Caco-2 (cell line): ENCODE measurements at regions of chr9 and their contacts with region 1.

Region 1: GRCh38 chr9:134449221-134449894 is 123.1 kb downstream of the RXRA start:
- DNase-seq: peak; percentile 87 to 89
- H3K4me3 ChIP-seq: no peak overlapping the region
- H3K4me3 Mint-ChIP-seq: no peak overlapping the region
- H3K27ac Mint-ChIP-seq: no peak overlapping the region
- H3K4me1 ChIP-seq: peaks cover 6% of the 10 kb centered on the region
- H3K4me1 Mint-ChIP-seq: peaks cover 5% of the 10 kb centered on the region
- H3K27me3 ChIP-seq: no peaks in the 10 kb centered on the region
- H3K27me3 Mint-ChIP-seq: peaks cover 6% of the 10 kb centered on the region
- CTCF ChIP-seq: peak; percentile 55 to 86

Region 2: GRCh38 chr9:134517069-134517680 is 67.8 kb after region 1 on chr9:
- CTCF ChIA-PET with region 1: no interaction called
- POLR2A ChIA-PET with region 1: no interaction called
- intact Hi-C with region 1: no loop called
- DNase-seq: no peak
- H3K4me3 ChIP-seq: no peak overlapping the region
- H3K4me3 Mint-ChIP-seq: no peak overlapping the region
- H3K27ac Mint-ChIP-seq: no peak overlapping the region
- H3K4me1 ChIP-seq: no peaks in the 10 kb centered on the region
- H3K4me1 Mint-ChIP-seq: no peaks in the 10 kb centered on the region
- H3K27me3 ChIP-seq: no peaks in the 10 kb centered on the region
- H3K27me3 Mint-ChIP-seq: no peaks in the 10 kb centered on the region
- CTCF ChIP-seq: no peak

Region 3: GRCh38 chr9:134656334-134657006 is 207.1 kb after region 1 on chr9:
- CTCF ChIA-PET with region 1: interaction called, 8 read pairs
- POLR2A ChIA-PET with region 1: no interaction called
- intact Hi-C with region 1: loop called (anchors 5 kb)
- DNase-seq: peak in 1 of 2 experiments; percentile 30
- H3K4me3 ChIP-seq: no peak overlapping the region
- H3K4me3 Mint-ChIP-seq: no peak overlapping the region
- H3K27ac Mint-ChIP-seq: no peak overlapping the region
- H3K4me1 ChIP-seq: no peaks in the 10 kb centered on the region
- H3K4me1 Mint-ChIP-seq: peaks cover 6% of the 10 kb centered on the region
- H3K27me3 ChIP-seq: no peaks in the 10 kb centered on the region
- H3K27me3 Mint-ChIP-seq: no peaks in the 10 kb centered on the region
- CTCF ChIP-seq: no peak

Region 4: DNA sequence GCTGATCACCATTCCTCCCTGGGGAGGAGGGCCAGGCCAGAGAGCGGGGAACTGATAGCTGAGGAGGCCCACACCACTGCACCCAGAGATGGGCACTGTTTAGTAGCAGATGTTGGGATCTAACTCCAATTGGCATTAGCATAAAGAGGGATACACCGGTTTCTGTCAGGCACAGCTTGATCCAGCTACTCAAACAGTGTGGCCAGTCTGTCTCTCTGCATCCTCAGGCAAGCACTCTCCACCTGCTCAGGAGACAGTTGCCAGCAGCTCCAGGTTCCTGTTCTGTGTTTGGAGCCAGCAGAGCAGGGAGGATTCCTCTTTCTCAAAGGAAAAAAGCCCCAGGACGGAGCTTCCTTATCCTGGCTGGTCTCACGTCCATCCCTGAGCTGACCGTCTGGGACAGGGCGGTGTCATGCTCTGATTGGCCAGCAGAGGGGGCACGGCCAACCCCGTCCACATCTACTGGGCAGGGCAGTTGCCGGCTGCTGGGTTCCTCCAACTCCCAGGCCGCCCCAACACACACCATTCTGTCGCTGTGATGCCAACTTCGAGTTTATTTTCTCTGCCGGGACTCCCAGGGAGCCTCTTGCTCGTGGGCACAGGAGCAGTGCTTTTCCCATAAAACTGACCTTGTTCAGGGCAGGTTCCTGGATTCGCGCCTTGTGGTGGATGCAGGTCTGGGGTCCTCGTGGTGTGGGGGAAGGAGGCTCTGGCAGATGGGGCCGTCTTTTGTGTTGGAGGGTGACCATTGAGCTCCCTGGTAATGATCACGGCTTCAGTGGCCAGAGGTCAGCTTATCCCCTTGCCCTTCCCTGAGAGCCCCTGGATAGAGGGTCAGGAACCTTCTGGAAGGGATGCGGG is 240.2 kb after region 1 on chr9:
- CTCF ChIA-PET with region 1: interaction called, 5 read pairs
- POLR2A ChIA-PET with region 1: no interaction called
- intact Hi-C with region 1: loop called (anchors 2 kb)
- DNase-seq: peak; percentile 67 to 75
- H3K4me3 ChIP-seq: no peak overlapping the region
- H3K4me3 Mint-ChIP-seq: no peak overlapping the region
- H3K27ac Mint-ChIP-seq: no peak overlapping the region
- H3K4me1 ChIP-seq: no peaks in the 10 kb centered on the region
- H3K4me1 Mint-ChIP-seq: no peaks in the 10 kb centered on the region
- H3K27me3 ChIP-seq: no peaks in the 10 kb centered on the region
- H3K27me3 Mint-ChIP-seq: no peaks in the 10 kb centered on the region
- CTCF ChIP-seq: peak; percentile 78 to 83

Region 5: GRCh38 chr9:134698587-134699342 is 249.4 kb after region 1 on chr9:
- CTCF ChIA-PET with region 1: no interaction called
- POLR2A ChIA-PET with region 1: no interaction called
- intact Hi-C with region 1: loop called (anchors 1 kb)
- DNase-seq: peak; percentile 74 to 83
- H3K4me3 ChIP-seq: no peak overlapping the region
- H3K4me3 Mint-ChIP-seq: no peak overlapping the region
- H3K27ac Mint-ChIP-seq: no peak overlapping the region
- H3K4me1 ChIP-seq: no peaks in the 10 kb centered on the region
- H3K4me1 Mint-ChIP-seq: no peaks in the 10 kb centered on the region
- H3K27me3 ChIP-seq: no peaks in the 10 kb centered on the region
- H3K27me3 Mint-ChIP-seq: no peaks in the 10 kb centered on the region
- CTCF ChIP-seq: peak; percentile 90 to 93

Region 6: GRCh38 chr9:134738869-134739659 is 289.7 kb after region 1 on chr9:
- CTCF ChIA-PET with region 1: interaction called, 16 read pairs
- POLR2A ChIA-PET with region 1: no interaction called
- intact Hi-C with region 1: no loop called
- DNase-seq: peak; percentile 72 to 79
- H3K4me3 ChIP-seq: no peak overlapping the region
- H3K4me3 Mint-ChIP-seq: no peak overlapping the region
- H3K27ac Mint-ChIP-seq: no peak overlapping the region
- H3K4me1 ChIP-seq: no peaks in the 10 kb centered on the region
- H3K4me1 Mint-ChIP-seq: no peaks in the 10 kb centered on the region
- H3K27me3 ChIP-seq: no peaks in the 10 kb centered on the region
- H3K27me3 Mint-ChIP-seq: peaks cover 17% of the 10 kb centered on the region
- CTCF ChIP-seq: peak; percentile 90 to 93